T-cell (primary cell): ENCODE measurements at regions of chr14 and their contacts with region 1.

Region 1: GRCh38 chr14:64914237-64914971 is at the start of gene CHURC1:
- DNase-seq: peak; percentile 88 to 99 (median 96)
- ATAC-seq: peak; percentile 97 to 99 (median 98)
- H3K4me3 ChIP-seq: peak within 1 kb of the TSS; percentile 95 to 98
- H3K4me3 Mint-ChIP-seq: peak within 1 kb of the TSS; percentile 92 to 98 (median 93)
- H3K27ac ChIP-seq: peak within 1 kb of the TSS; percentile 99
- H3K27ac Mint-ChIP-seq: peak within 1 kb of the TSS; percentile 89 to 90
- H3K4me1 ChIP-seq: peaks cover 17 to 30% of the 10 kb centered on the region in 2 experiments
- H3K4me1 Mint-ChIP-seq: peaks cover 47 to 56% (median 53%) of the 10 kb centered on the region in 3 donors
- H3K27me3 ChIP-seq: no peaks in the 10 kb centered on the region
- H3K27me3 Mint-ChIP-seq: peaks cover 0 to 3% of the 10 kb centered on the region in 2 donors
- total RNA-seq, gene CHURC1: 57.6 to 99.7 (median 91.1) TPM

Region 2: GRCh38 chr14:64855721-64856528 is 58.5 kb before region 1 on chr14:
- CTCF ChIA-PET with region 1: no interaction called
- POLR2A ChIA-PET with region 1: no interaction called
- DNase-seq: no peak
- ATAC-seq: no peak
- H3K4me3 ChIP-seq: no peak overlapping the region
- H3K4me3 Mint-ChIP-seq: no peak overlapping the region
- H3K27ac ChIP-seq: no peak overlapping the region
- H3K27ac Mint-ChIP-seq: no peak overlapping the region
- H3K4me1 ChIP-seq: no peaks in the 10 kb centered on the region
- H3K4me1 Mint-ChIP-seq: no peaks in the 10 kb centered on the region
- H3K27me3 ChIP-seq: peaks cover 2 to 42% of the 10 kb centered on the region in 2 experiments
- H3K27me3 Mint-ChIP-seq: peaks cover 12 to 23% of the 10 kb centered on the region in 2 donors

Region 3: GRCh38 chr14:64928239-64929013 is 14.0 kb after region 1 on chr14:
- CTCF ChIA-PET with region 1: interaction called, 3 to 13 read pairs
- POLR2A ChIA-PET with region 1: interaction called, 10 to 20 read pairs
- DNase-seq: peak in 4 of 35 experiments; percentile 3 to 60 (median 15)
- ATAC-seq: peak; percentile 76 to 86 (median 82)
- H3K4me3 ChIP-seq: peak overlapping the region; percentile 20 to 30
- H3K4me3 Mint-ChIP-seq: no peak overlapping the region
- H3K27ac ChIP-seq: peak overlapping the region; percentile 82
- H3K27ac Mint-ChIP-seq: no peak overlapping the region
- H3K4me1 ChIP-seq: peaks cover 38 to 52% of the 10 kb centered on the region in 2 experiments
- H3K4me1 Mint-ChIP-seq: peaks cover 32 to 33% (median 32%) of the 10 kb centered on the region in 3 donors
- H3K27me3 ChIP-seq: no peaks in the 10 kb centered on the region
- H3K27me3 Mint-ChIP-seq: no peaks in the 10 kb centered on the region